Right lobe of liver (tissue), 6 donors: ENCODE measurements at regions of chr1 and their contacts with region 1.

Region 1: GRCh38 chr1:171233190-171233589 is 15.1 kb upstream of the FMO1 start:
- DNase-seq: no peak
- ATAC-seq: no peak
- H3K4me3 ChIP-seq: no peak overlapping the region
- H3K27ac ChIP-seq: no peak overlapping the region
- H3K4me1 ChIP-seq: no peaks in the 10 kb centered on the region
- H3K27me3 ChIP-seq: no peaks in the 10 kb centered on the region
- CTCF ChIP-seq: no peak
- POLR2A ChIP-seq: no peak

Region 2: DNA sequence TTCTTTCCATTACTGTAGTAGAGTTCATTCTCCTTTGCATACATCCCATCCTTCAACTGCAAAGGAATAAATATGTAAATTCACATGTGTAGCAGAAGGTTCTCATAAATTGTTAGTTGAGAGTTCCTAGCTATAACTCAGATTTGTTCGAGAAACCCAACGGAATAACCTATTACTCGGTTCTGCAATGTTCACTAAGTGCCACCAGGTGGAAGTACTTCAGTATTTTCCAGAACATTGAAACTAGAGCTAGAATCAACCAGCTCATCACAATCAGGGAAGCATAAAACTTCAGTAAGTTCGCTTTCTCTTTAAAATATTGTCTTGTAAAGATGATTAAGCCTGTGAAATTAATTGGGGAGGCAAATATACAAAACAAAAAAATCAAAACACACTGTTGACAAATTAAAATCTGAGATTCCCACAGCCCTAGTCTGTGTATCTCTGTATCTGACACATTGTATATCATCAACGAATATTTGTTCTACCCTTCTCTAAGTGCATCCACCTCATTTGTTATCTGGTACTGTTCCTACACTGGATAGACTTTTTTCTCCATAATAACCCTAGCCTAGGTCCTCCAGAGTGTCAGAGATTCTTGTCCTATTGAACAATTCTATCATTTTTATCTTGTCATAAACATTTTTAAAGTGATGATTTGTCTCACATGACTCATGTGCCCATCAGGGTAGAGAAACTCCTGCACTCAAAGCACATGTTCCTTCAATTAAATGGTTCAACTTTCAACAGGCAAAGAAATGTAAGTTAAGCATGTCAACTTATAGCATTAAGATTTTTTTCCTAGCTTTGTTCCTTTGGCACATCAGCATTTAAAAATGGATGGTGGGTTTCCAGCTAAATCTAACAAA is 265.9 kb before region 1 on chr1:
- intact Hi-C with region 1: loop called in 1 of 2 experiments (anchors 10 kb)
- DNase-seq: no peak
- ATAC-seq: peak; percentile 85 to 89 (median 87)
- H3K4me3 ChIP-seq: no peak overlapping the region
- H3K27ac ChIP-seq: no peak overlapping the region
- H3K4me1 ChIP-seq: no peaks in the 10 kb centered on the region
- H3K27me3 ChIP-seq: no peaks in the 10 kb centered on the region
- CTCF ChIP-seq: peak; percentile 45 to 67 (median 65)
- POLR2A ChIP-seq: no peak

Region 3: DNA sequence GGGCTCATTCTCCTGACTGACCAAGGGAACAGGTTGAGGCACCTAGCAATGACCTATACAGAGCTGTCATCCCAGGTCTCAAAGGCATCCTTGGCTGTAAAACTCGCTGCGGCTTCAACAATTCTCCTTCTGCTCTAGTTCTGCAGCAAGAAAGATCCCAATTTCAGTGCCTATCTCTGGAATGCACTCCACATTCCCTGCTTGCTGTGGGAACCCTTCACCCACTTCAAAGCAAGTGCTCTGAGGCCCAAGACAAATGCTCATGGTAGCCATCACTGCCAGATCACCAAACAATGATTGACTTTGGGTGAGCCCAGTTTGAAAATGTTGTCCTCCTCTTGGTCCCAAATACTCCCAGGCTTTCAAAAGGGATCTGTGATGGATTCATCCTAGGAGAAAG is 180.2 kb before region 1 on chr1:
- intact Hi-C with region 1: no loop called
- DNase-seq: no peak
- ATAC-seq: no peak
- H3K4me3 ChIP-seq: no peak overlapping the region
- H3K27ac ChIP-seq: no peak overlapping the region
- H3K4me1 ChIP-seq: no peaks in the 10 kb centered on the region
- H3K27me3 ChIP-seq: no peaks in the 10 kb centered on the region
- CTCF ChIP-seq: no peak
- POLR2A ChIP-seq: no peak